PC-9 (cell line): ENCODE measurements at regions of chr4 and their contacts with region 1.

Region 1: GRCh38 chr4:140153718-140154571 is at the start of gene MAML3:
- DNase-seq: peak; percentile 74 to 92
- H3K4me3 ChIP-seq: peak within 1 kb of the TSS; percentile 87
- H3K27ac ChIP-seq: peak within 1 kb of the TSS; percentile 100
- H3K4me1 ChIP-seq: peaks cover 19% of the 10 kb centered on the region
- H3K27me3 ChIP-seq: no peaks in the 10 kb centered on the region
- CTCF ChIP-seq: no peak
- total RNA-seq, gene MAML3: 10.5 and 15.2 TPM in 2 replicates

Region 2: GRCh38 chr4:140012688-140013486 is 141.1 kb before region 1 on chr4:
- CTCF ChIA-PET with region 1: interaction called, 8 read pairs
- POLR2A ChIA-PET with region 1: interaction called, 4 read pairs
- intact Hi-C with region 1: loop called (anchors 1 kb)
- DNase-seq: peak; percentile 74 to 91
- H3K4me3 ChIP-seq: no peak overlapping the region
- H3K27ac ChIP-seq: peak overlapping the region; percentile 74
- H3K4me1 ChIP-seq: peaks cover 30% of the 10 kb centered on the region
- H3K27me3 ChIP-seq: no peaks in the 10 kb centered on the region
- CTCF ChIP-seq: peak; percentile 79

Region 3: DNA sequence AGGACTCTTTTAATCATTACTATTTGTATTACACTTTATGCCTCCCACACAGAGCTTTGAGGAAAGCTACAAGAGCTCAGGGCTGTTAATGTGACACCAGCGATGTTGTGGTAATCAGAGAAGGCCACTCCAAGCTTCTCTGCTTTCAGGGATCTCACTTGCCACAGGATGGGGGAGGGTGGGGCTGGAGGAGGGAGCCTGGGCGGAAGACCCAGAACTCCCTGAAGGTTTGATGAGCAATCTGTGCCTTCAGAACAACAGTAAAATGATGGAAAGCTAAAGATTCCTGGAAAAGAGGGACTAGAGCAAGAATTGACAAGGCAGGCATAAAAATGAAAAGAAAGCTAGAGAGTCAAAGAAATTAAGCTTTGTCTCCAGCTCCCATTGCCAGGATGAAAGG is 75.6 kb before region 1 on chr4:
- CTCF ChIA-PET with region 1: no interaction called
- POLR2A ChIA-PET with region 1: interaction called, 36 read pairs
- intact Hi-C with region 1: no loop called
- DNase-seq: no peak
- H3K4me3 ChIP-seq: no peak overlapping the region
- H3K27ac ChIP-seq: peak overlapping the region; percentile 14; the same call in 1 of the 2 replicates
- H3K4me1 ChIP-seq: peaks cover 7% of the 10 kb centered on the region
- H3K27me3 ChIP-seq: no peaks in the 10 kb centered on the region
- CTCF ChIP-seq: no peak

Region 4: GRCh38 chr4:140137671-140138070 is 16.3 kb before region 1 on chr4:
- CTCF ChIA-PET with region 1: interaction called, 4 read pairs
- POLR2A ChIA-PET with region 1: interaction called, 6 read pairs
- intact Hi-C with region 1: loop called (anchors 1 kb)
- DNase-seq: peak in 1 of 2 experiments; percentile 84
- H3K4me3 ChIP-seq: peak overlapping the region; percentile 50; the same call in 1 of the 2 replicates
- H3K27ac ChIP-seq: peak overlapping the region; percentile 99
- H3K4me1 ChIP-seq: peaks cover 95% of the 10 kb centered on the region
- H3K27me3 ChIP-seq: no peaks in the 10 kb centered on the region
- CTCF ChIP-seq: no peak

Region 5: DNA sequence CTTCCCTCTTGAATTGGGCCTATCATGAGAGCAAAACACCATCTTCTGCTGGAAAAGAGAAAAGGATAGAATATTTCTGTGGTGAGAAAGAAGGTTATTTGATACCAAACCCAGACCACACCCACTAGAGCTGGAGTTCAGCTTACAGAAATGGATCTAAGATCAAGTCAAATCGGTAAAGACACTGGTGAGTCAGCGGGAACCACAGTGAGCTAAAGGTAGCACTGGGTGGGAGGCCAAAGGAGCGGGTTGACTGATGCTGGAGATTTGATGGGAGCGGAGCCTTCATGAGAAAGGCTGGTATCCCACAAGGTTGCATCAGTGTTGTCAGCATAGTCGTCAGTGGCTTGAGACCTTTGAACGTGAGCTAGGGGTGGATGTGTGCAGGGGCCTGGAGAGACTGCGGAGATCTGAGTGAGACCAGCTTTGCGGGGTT is 113.1 kb after region 1 on chr4:
- CTCF ChIA-PET with region 1: no interaction called
- POLR2A ChIA-PET with region 1: interaction called, 6 read pairs
- intact Hi-C with region 1: loop called (anchors 1 kb)
- DNase-seq: peak; percentile 73 to 95
- H3K4me3 ChIP-seq: peak overlapping the region; percentile 55
- H3K27ac ChIP-seq: peak overlapping the region; percentile 99
- H3K4me1 ChIP-seq: peaks cover 30% of the 10 kb centered on the region
- H3K27me3 ChIP-seq: no peaks in the 10 kb centered on the region
- CTCF ChIP-seq: no peak

Region 6: GRCh38 chr4:140851032-140851636 is 697.2 kb after region 1 on chr4:
- CTCF ChIA-PET with region 1: no interaction called
- POLR2A ChIA-PET with region 1: no interaction called
- intact Hi-C with region 1: loop called (anchors 10 kb)
- DNase-seq: peak; percentile 41 to 43
- H3K4me3 ChIP-seq: no peak overlapping the region
- H3K27ac ChIP-seq: no peak overlapping the region
- H3K4me1 ChIP-seq: peaks cover 2% of the 10 kb centered on the region
- H3K27me3 ChIP-seq: no peaks in the 10 kb centered on the region
- CTCF ChIP-seq: peak; percentile 84